Psoas muscle (tissue), 8 donors: ENCODE measurements at regions of chr19 and their contacts with region 1.

Region 1: DNA sequence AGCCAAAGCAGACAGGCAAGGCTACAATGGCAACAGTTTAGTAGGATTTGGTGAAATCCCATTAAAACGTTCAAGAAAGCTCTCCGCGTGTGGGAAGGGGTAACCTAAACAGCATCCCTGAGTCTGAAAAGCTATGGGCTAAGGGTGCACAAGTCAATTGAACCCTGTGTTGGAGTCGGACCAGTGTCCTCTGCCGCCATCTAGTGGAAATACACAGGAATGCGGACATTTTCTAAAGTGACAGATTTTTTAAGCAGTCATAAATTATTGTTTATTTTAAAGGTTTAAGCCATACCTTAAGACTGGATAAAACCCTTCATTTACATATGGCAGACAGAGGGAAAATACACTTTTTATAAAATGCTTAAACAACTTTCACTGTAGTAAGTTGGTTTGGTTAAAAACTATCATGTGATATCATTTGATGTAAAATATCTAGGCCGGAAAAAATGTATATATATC is 26.5 kb upstream of the LSM14A start:
- DNase-seq: no peak
- ATAC-seq: peak in 3 of 4 donors; percentile 46 to 63 (median 58)
- H3K4me3 ChIP-seq: no peak overlapping the region
- H3K27ac ChIP-seq: no peak overlapping the region
- H3K4me1 ChIP-seq: no peaks in the 10 kb centered on the region
- H3K27me3 ChIP-seq: no peaks in the 10 kb centered on the region
- CTCF ChIP-seq: peak; percentile 76

Region 2: GRCh38 chr19:33430674-33431277 is 715.0 kb before region 1 on chr19:
- intact Hi-C with region 1: loop called in 1 of 2 experiments (anchors 10 kb)
- DNase-seq: peak; percentile 65 to 84
- ATAC-seq: peak; percentile 78 to 91 (median 83)
- H3K4me3 ChIP-seq: no peak overlapping the region
- H3K27ac ChIP-seq: no peak overlapping the region
- H3K4me1 ChIP-seq: no peaks in the 10 kb centered on the region
- H3K27me3 ChIP-seq: peaks cover 0 to 2% (median 0%) of the 10 kb centered on the region in 3 donors
- CTCF ChIP-seq: peak; percentile 76

Region 3: GRCh38 chr19:33785795-33786194 is 360.0 kb before region 1 on chr19:
- intact Hi-C with region 1: loop called in 1 of 2 experiments (anchors 10 kb)
- DNase-seq: no peak
- ATAC-seq: no peak
- H3K4me3 ChIP-seq: no peak overlapping the region
- H3K27ac ChIP-seq: no peak overlapping the region
- H3K4me1 ChIP-seq: no peaks in the 10 kb centered on the region
- H3K27me3 ChIP-seq: peaks cover 0 to 40% (median 7%) of the 10 kb centered on the region in 3 donors
- CTCF ChIP-seq: no peak

Region 4: GRCh38 chr19:34041925-34042521 is 103.7 kb before region 1 on chr19:
- intact Hi-C with region 1: loop called in 1 of 2 experiments (anchors 5 kb)
- DNase-seq: peak; percentile 65 to 77
- ATAC-seq: no peak
- H3K4me3 ChIP-seq: no peak overlapping the region
- H3K27ac ChIP-seq: no peak overlapping the region
- H3K4me1 ChIP-seq: no peaks in the 10 kb centered on the region
- H3K27me3 ChIP-seq: no peaks in the 10 kb centered on the region
- CTCF ChIP-seq: peak; percentile 58